Left colon (tissue), 2 donors: ENCODE measurements at regions of chr2 and their contacts with region 1.

Region 1: DNA sequence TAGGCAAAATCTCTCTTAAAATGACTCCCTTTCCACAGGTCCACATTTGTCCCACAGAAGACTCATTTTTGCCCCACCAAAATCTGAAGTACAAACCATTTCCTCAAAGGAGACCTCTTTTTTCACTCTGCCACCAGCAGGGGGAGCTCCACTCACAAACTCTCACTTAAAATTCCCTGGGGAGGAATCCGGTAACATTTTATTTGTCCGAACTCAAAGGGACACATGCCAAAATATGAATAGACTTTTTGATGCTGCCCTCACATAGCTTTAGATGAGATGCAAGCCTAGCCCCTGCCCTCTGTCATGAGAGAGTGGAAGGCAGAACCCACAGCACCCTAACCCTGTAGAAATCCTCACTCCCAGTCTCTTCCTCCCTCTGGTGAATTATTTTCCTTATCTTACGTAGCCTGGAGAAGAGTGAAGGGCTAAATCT is 57.1 kb downstream of the RMDN2 start:
- DNase-seq: peak; percentile 34 to 77
- ATAC-seq: peak; percentile 42

Region 2: GRCh38 chr2:38128653-38129052 is 146.5 kb after region 1 on chr2:
- intact Hi-C with region 1: loop called in 1 of 2 experiments (anchors 10 kb)
- DNase-seq: no peak
- ATAC-seq: no peak

Region 3: GRCh38 chr2:38274286-38275276 is 292.4 kb after region 1 on chr2:
- intact Hi-C with region 1: loop called in 1 of 2 experiments (anchors 5 kb)
- DNase-seq: no peak
- ATAC-seq: peak; percentile 77